ENCODE measurements at regions of chr17 and their contacts with region 1.

Region 1: GRCh38 chr17:49227436-49228261 is 2.9 kb downstream of the PHOSPHO1 start:
- DNase-seq: peak; percentile 74
- H3K4me3 Mint-ChIP-seq: no peak overlapping the region
- H3K27ac Mint-ChIP-seq: no peak overlapping the region
- H3K4me1 Mint-ChIP-seq: no peaks in the 10 kb centered on the region
- H3K27me3 Mint-ChIP-seq: peaks cover 26% of the 10 kb centered on the region
- CTCF ChIP-seq: peak; percentile 89

Region 2: GRCh38 chr17:49041527-49041926 is 186.1 kb before region 1 on chr17:
- CTCF ChIA-PET with region 1: interaction called, 11 read pairs
- POLR2A ChIA-PET with region 1: no interaction called
- intact Hi-C with region 1: no loop called
- DNase-seq: no peak
- H3K4me3 Mint-ChIP-seq: no peak overlapping the region
- H3K27ac Mint-ChIP-seq: no peak overlapping the region
- H3K4me1 Mint-ChIP-seq: no peaks in the 10 kb centered on the region
- H3K27me3 Mint-ChIP-seq: peaks cover under 1% of the 10 kb centered on the region
- CTCF ChIP-seq: no peak

Region 3: DNA sequence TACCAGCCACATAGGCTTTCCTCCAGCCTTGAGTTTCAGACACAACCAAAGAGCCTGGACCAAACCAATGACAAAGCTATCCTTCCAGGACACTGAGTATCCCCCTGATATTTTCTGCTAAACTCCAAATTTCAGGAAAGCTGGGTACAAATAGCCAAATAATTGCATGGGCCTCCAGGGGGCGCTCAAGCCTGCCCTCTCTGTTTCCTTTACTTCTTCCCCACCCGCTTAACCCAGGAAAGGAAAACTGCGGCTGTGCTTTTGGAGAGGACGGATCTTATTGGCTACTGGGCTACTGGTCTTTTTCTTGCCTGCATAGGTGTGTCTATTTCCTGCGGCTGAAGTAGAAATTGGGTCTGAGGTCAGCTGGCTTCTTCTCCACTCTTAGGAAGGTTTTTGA is 47.3 kb before region 1 on chr17:
- CTCF ChIA-PET with region 1: interaction called, 6 read pairs
- POLR2A ChIA-PET with region 1: no interaction called
- intact Hi-C with region 1: loop called (anchors 1 kb)
- DNase-seq: peak; percentile 68
- H3K4me3 Mint-ChIP-seq: no peak overlapping the region
- H3K27ac Mint-ChIP-seq: no peak overlapping the region
- H3K4me1 Mint-ChIP-seq: no peaks in the 10 kb centered on the region
- H3K27me3 Mint-ChIP-seq: no peaks in the 10 kb centered on the region
- CTCF ChIP-seq: peak; percentile 53

Region 4: GRCh38 chr17:49197346-49197998 is 30.2 kb before region 1 on chr17:
- CTCF ChIA-PET with region 1: interaction called, 10 read pairs
- POLR2A ChIA-PET with region 1: no interaction called
- intact Hi-C with region 1: no loop called
- DNase-seq: no peak
- H3K4me3 Mint-ChIP-seq: no peak overlapping the region
- H3K27ac Mint-ChIP-seq: no peak overlapping the region
- H3K4me1 Mint-ChIP-seq: no peaks in the 10 kb centered on the region
- H3K27me3 Mint-ChIP-seq: peaks cover under 1% of the 10 kb centered on the region
- CTCF ChIP-seq: no peak

Region 5: DNA sequence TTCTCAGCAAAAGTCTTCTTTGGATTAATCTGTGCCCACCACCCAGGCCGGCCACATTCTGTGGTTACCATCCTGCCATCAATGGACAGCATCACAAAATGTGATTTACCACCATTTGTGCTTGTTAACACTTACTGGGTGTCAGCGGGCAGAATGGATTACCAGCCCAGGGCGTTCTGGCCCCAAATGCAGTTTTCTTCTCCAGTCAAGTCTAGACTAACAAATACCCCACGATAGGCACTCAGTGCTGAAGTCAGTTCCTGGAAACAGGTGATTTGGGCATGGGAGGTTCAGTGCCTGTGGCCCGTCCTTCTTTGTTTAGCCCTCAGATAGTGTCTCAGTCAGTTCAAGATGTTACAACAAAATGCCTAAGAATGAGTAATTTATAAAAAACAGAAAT is 41.7 kb after region 1 on chr17:
- CTCF ChIA-PET with region 1: no interaction called
- POLR2A ChIA-PET with region 1: no interaction called
- intact Hi-C with region 1: no loop called
- DNase-seq: no peak
- H3K4me3 Mint-ChIP-seq: no peak overlapping the region
- H3K27ac Mint-ChIP-seq: no peak overlapping the region
- H3K4me1 Mint-ChIP-seq: peaks cover 8% of the 10 kb centered on the region
- H3K27me3 Mint-ChIP-seq: no peaks in the 10 kb centered on the region
- CTCF ChIP-seq: no peak

Region 6: GRCh38 chr17:49290690-49291359 is 63.2 kb after region 1 on chr17:
- CTCF ChIA-PET with region 1: interaction called, 3 read pairs
- POLR2A ChIA-PET with region 1: no interaction called
- intact Hi-C with region 1: loop called (anchors 2 kb)
- DNase-seq: peak; percentile 47
- H3K4me3 Mint-ChIP-seq: no peak overlapping the region
- H3K27ac Mint-ChIP-seq: no peak overlapping the region
- H3K4me1 Mint-ChIP-seq: no peaks in the 10 kb centered on the region
- H3K27me3 Mint-ChIP-seq: no peaks in the 10 kb centered on the region
- CTCF ChIP-seq: peak; percentile 49